OCI-LY7 (cell line): ENCODE measurements at regions of chr16 and their contacts with region 1.

Region 1: GRCh38 chr16:81723098-81723723 is 55.9 kb upstream of the PLCG2 start:
- DNase-seq: peak; percentile 90
- H3K4me3 ChIP-seq: no peak overlapping the region
- H3K27ac ChIP-seq: no peak overlapping the region
- H3K4me1 ChIP-seq: peaks cover 18% of the 10 kb centered on the region
- CTCF ChIP-seq: peak; percentile 86

Region 2: GRCh38 chr16:81204798-81205680 is 518.2 kb before region 1 on chr16:
- CTCF ChIA-PET with region 1: no interaction called
- POLR2A ChIA-PET with region 1: no interaction called
- intact Hi-C with region 1: loop called (anchors 5 kb)
- DNase-seq: peak; percentile 46
- H3K4me3 ChIP-seq: no peak overlapping the region
- H3K27ac ChIP-seq: no peak overlapping the region
- H3K4me1 ChIP-seq: no peaks in the 10 kb centered on the region
- CTCF ChIP-seq: peak; percentile 92

Region 3: GRCh38 chr16:81366316-81366932 is 356.8 kb before region 1 on chr16:
- CTCF ChIA-PET with region 1: interaction called, 3 read pairs
- POLR2A ChIA-PET with region 1: no interaction called
- intact Hi-C with region 1: loop called (anchors 1 kb)
- DNase-seq: peak; percentile 70
- H3K4me3 ChIP-seq: no peak overlapping the region
- H3K27ac ChIP-seq: no peak overlapping the region
- H3K4me1 ChIP-seq: no peaks in the 10 kb centered on the region
- CTCF ChIP-seq: peak; percentile 96

Region 4: GRCh38 chr16:81403616-81404373 is 319.4 kb before region 1 on chr16:
- CTCF ChIA-PET with region 1: no interaction called
- POLR2A ChIA-PET with region 1: no interaction called
- intact Hi-C with region 1: loop called (anchors 1 kb)
- DNase-seq: peak; percentile 86
- H3K4me3 ChIP-seq: peak overlapping the region; percentile 55
- H3K27ac ChIP-seq: no peak overlapping the region
- H3K4me1 ChIP-seq: peaks cover 10% of the 10 kb centered on the region
- CTCF ChIP-seq: peak; percentile 92

Region 5: DNA sequence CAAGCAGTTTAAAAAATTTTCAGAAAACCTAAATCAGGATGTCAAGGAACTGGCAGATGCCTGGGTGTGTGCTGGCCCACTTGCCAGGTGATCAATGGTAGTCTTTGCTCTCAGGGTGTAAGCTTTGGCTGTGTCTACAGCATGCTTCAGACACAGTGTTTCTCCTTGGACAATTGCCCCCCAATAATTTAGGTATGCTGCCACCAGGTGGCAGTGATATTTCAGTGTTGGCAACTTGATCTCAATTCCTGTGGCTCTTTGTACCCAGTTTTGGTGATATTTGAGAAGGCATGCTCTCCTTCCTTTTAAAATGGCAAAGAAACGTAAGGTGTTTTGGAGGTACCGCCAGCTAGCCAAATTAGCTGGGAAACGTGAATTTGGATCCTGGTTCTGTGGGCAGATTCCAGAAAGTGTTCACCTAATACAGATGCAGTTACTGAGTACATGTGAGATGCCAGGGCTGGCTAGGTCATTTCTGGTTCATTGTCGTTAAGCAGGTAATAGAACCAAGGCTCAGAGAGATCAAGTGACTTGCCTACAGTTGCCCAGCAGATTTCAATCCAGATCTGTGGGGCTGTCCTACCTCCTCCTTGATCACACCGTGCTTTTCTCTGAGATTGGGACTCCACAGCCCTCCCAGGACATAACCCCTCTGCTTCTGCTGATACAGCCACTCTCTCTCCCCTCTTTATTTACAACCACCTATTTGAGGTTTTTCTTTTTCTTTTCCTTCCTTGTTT is 99.7 kb before region 1 on chr16:
- CTCF ChIA-PET with region 1: no interaction called
- POLR2A ChIA-PET with region 1: no interaction called
- intact Hi-C with region 1: loop called (anchors 1 kb)
- DNase-seq: peak; percentile 72
- H3K4me3 ChIP-seq: no peak overlapping the region
- H3K27ac ChIP-seq: no peak overlapping the region
- H3K4me1 ChIP-seq: no peaks in the 10 kb centered on the region
- CTCF ChIP-seq: peak; percentile 90

Region 6: GRCh38 chr16:81831722-81832126 is 108.5 kb after region 1 on chr16:
- CTCF ChIA-PET with region 1: no interaction called
- POLR2A ChIA-PET with region 1: no interaction called
- intact Hi-C with region 1: no loop called
- DNase-seq: peak; percentile 95
- H3K4me3 ChIP-seq: peak overlapping the region; percentile 70
- H3K27ac ChIP-seq: peak overlapping the region; percentile 97
- H3K4me1 ChIP-seq: peaks cover 97% of the 10 kb centered on the region
- CTCF ChIP-seq: peak; percentile 54